Endothelial cell of umbilical vein (primary cell): ENCODE measurements at regions of chr5 and their contacts with region 1.

Region 1: GRCh38 chr5:178279725-178280438 is 47.3 kb upstream of the PHYKPL start:
- DNase-seq: peak; percentile 70
- H3K4me3 ChIP-seq: no peak overlapping the region
- H3K27ac ChIP-seq: no peak overlapping the region
- H3K4me1 ChIP-seq: no peaks in the 10 kb centered on the region
- H3K27me3 ChIP-seq: no peaks in the 10 kb centered on the region
- CTCF ChIP-seq: peak; percentile 94 to 97
- POLR2A ChIP-seq: no peak

Region 2: GRCh38 chr5:178143901-178144300 is 136.0 kb before region 1 on chr5:
- CTCF ChIA-PET with region 1: no interaction called
- POLR2A ChIA-PET with region 1: no interaction called
- dilution Hi-C with region 1: no loop called
- intact Hi-C with region 1: no loop called
- DNase-seq: no peak
- H3K4me3 ChIP-seq: no peak overlapping the region
- H3K27ac ChIP-seq: no peak overlapping the region
- H3K4me1 ChIP-seq: no peaks in the 10 kb centered on the region
- H3K27me3 ChIP-seq: no peaks in the 10 kb centered on the region
- CTCF ChIP-seq: no peak
- POLR2A ChIP-seq: no peak

Region 3: DNA sequence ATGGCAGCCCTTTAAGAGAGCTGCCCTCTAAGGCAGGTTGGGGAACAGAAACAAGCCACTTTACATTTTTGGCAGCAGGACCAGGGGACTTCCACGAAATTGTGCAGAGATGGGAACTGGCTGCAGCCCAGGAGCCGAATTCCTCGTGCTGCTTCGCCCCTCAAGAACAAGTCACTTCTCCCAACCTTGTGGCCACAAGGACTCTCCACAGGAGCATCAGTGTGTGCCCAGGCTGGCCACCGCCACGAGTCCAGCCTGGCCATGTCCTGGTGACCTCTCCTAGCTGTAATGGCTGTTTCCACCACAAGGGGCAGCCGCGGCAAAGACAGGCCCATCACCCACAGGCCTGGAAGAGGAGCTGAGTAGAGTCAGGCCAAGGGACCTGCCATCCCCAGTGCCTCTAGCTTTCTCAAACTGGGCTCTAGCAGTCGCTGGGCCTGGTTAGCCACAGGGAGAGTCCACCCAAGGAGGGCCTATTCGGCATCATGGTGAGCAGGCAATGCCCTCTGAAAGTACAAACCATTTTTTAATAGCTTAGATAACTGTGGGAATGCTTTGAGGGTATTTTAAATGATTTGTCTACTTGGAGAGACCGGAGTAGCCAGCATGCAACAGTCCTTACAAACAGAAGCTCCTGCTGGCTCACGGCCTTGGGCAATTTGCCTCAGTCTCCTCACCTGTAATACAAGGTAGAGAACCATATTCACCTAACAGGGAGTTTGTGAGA is 181.3 kb after region 1 on chr5:
- CTCF ChIA-PET with region 1: interaction called, 3 read pairs
- POLR2A ChIA-PET with region 1: no interaction called
- dilution Hi-C with region 1: no loop called
- intact Hi-C with region 1: loop called (anchors 5 kb)
- DNase-seq: peak; percentile 43
- H3K4me3 ChIP-seq: no peak overlapping the region
- H3K27ac ChIP-seq: no peak overlapping the region
- H3K4me1 ChIP-seq: no peaks in the 10 kb centered on the region
- H3K27me3 ChIP-seq: no peaks in the 10 kb centered on the region
- CTCF ChIP-seq: peak; percentile 73 to 79
- POLR2A ChIP-seq: no peak

Region 4: GRCh38 chr5:178496642-178497041 is 216.8 kb after region 1 on chr5:
- CTCF ChIA-PET with region 1: no interaction called
- POLR2A ChIA-PET with region 1: no interaction called
- dilution Hi-C with region 1: no loop called
- intact Hi-C with region 1: loop called (anchors 1 kb)
- DNase-seq: peak; percentile 64
- H3K4me3 ChIP-seq: no peak overlapping the region
- H3K27ac ChIP-seq: peak overlapping the region; percentile 70
- H3K4me1 ChIP-seq: peaks cover 9% of the 10 kb centered on the region
- H3K27me3 ChIP-seq: no peaks in the 10 kb centered on the region
- CTCF ChIP-seq: no peak
- POLR2A ChIP-seq: no peak

Region 5: GRCh38 chr5:178551059-178551458 is 271.2 kb after region 1 on chr5:
- CTCF ChIA-PET with region 1: interaction called, 10 read pairs
- POLR2A ChIA-PET with region 1: no interaction called
- dilution Hi-C with region 1: no loop called
- intact Hi-C with region 1: loop called (anchors 1 kb)
- DNase-seq: peak; percentile 28
- H3K4me3 ChIP-seq: no peak overlapping the region
- H3K27ac ChIP-seq: no peak overlapping the region
- H3K4me1 ChIP-seq: peaks cover 5% of the 10 kb centered on the region
- H3K27me3 ChIP-seq: no peaks in the 10 kb centered on the region
- CTCF ChIP-seq: peak in 1 of 2 donors; percentile 22
- POLR2A ChIP-seq: no peak

Region 6: GRCh38 chr5:178590141-178590923 is 310.4 kb after region 1 on chr5 and contains the start of gene COL23A1:
- CTCF ChIA-PET with region 1: interaction called, 7 read pairs
- POLR2A ChIA-PET with region 1: no interaction called
- dilution Hi-C with region 1: no loop called
- intact Hi-C with region 1: loop called (anchors 1 kb)
- DNase-seq: peak; percentile 55
- H3K4me3 ChIP-seq: peak within 1 kb of the TSS in 1 of 3 experiments; percentile 29
- H3K27ac ChIP-seq: no peak within 1 kb of the TSS
- H3K4me1 ChIP-seq: peaks cover 6% of the 10 kb centered on the region
- H3K27me3 ChIP-seq: peaks cover 39 to 58% of the 10 kb centered on the region in 2 experiments
- CTCF ChIP-seq: peak; percentile 72 to 77
- POLR2A ChIP-seq: no peak
- total RNA-seq, gene COL23A1: not detected in 2 replicates

Region 7: GRCh38 chr5:179495906-179496455 is 1216.1 kb after region 1 on chr5:
- CTCF ChIA-PET with region 1: interaction called, 65 read pairs
- POLR2A ChIA-PET with region 1: no interaction called
- dilution Hi-C with region 1: no loop called
- intact Hi-C with region 1: loop called (anchors 1 kb)
- DNase-seq: no peak
- H3K4me3 ChIP-seq: no peak overlapping the region
- H3K27ac ChIP-seq: no peak overlapping the region
- H3K4me1 ChIP-seq: no peaks in the 10 kb centered on the region
- H3K27me3 ChIP-seq: no peaks in the 10 kb centered on the region
- CTCF ChIP-seq: no peak
- POLR2A ChIP-seq: no peak